ENCODE measurements at regions of chr4 and their contacts with region 1.

Region 1: DNA sequence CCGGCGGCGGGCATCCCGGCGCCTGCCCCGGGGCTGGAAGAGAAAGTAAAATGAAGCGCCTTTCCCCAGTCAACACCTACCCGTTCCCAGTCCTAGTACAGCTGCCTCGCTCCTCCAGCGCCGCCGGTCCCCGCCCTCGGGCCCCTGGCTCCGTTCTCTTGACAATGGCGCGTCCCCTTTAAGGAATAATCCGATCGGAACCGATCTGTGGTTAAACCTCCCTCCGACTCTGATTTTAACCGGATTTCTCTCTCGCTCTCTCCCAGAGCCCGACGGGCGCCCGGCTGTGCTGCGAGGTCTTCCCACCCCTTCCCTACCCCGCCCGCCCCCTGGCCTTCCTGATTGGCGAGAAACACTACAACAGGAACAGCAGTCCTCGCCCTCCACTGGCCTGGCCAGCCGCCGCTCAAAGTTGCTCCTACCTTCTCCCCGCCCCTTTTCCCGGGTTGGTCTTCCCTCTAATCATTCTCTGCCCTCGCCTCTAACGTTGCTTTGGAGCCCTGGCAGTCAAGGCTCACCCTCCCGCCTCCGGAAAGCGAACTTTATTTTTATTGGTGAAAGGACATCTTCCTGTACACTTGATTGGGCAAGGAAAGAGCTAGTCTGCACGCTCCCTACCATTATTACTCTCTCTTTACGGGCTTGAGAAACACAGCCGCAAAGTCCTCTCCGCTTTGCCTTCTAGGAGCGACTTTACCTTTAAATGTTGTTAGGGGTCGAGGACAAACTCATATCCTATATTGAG is at the start of gene FRYL:
- DNase-seq: peak; percentile 100
- H3K4me3 ChIP-seq: peak within 1 kb of the TSS; percentile 76 to 92 (median 92)
- H3K27ac ChIP-seq: peak within 1 kb of the TSS; percentile 69 to 95 (median 93)
- H3K4me1 ChIP-seq: peaks cover 12 to 22% of the 10 kb centered on the region in 2 donors
- H3K27me3 ChIP-seq: no peaks in the 10 kb centered on the region
- CTCF ChIP-seq: no peak
- POLR2A ChIP-seq: peak in 1 of 2 donors; percentile 80
- total RNA-seq, gene FRYL: 48.7 to 90.4 (median 67.8) TPM

Region 2: DNA sequence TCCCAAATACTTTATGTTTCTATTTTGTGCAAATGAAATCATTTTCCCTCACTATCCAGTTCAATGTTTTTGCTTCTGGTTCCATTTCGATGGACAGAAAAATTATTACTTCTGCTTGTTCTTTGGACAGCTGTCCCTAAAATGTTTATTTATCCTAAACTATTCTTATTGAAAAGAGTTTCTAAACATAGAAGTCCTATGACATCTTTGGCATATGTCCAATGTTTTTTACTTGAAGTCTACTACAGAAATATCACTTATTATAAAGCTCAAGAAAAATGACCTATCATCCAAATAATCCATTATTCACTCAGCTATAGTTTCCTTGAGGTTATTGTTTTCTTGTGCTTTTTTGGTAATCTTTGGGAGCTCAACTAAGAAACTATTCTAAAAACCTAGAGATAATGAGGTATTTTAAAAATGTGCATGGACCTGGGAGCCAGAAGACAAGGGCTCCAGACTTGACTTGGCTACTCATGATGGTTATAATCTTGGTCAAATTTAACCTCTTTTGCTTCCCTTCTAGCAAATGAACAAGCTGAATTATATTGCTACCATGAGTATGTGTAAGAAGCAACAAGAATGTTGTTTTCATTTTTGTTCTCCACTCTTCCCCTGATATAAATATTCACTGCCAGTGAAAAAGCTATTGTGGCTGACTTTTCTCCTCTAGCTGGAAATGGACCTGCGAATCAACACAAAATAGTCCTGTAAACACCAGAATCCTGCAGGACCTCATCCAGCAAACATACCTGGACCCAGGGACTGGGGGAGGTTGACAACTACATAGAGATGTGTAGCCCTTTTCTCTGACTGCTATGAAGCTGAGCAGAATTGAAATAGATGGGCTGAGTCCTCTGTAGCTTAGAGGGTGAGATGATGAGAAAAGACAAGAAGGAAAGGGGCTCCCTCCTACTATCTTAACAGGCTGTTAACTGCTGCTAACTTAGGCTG is 137.5 kb before region 1 on chr4:
- intact Hi-C with region 1: no loop called
- DNase-seq: no peak
- H3K4me3 ChIP-seq: no peak overlapping the region
- H3K27ac ChIP-seq: peak overlapping the region in 2 of 3 donors; percentile 12 to 37
- H3K4me1 ChIP-seq: peaks cover 27 to 30% of the 10 kb centered on the region in 2 donors
- H3K27me3 ChIP-seq: no peaks in the 10 kb centered on the region
- CTCF ChIP-seq: no peak
- POLR2A ChIP-seq: no peak

Region 3: DNA sequence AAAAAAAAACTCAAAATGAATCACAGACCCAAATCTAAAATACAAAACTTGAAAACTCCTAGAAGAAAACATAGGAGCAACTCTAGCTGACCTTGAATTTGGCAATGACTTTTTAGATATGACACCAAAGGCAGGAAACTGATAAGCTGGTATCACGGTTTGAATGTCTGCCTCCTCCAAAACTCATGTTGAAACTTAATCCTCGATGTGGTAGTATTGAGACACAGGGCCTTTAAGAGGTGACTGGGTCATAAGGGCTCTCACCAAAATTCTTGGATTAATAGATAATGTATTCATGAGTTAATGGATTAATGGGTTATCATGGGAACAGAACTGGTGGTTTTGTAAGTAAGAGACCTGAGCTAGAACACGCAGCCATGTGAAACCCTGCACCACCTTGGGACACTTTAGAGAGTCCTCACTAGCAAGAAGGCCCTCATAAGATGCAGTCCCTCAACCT is 40.6 kb before region 1 on chr4:
- intact Hi-C with region 1: no loop called
- DNase-seq: no peak
- H3K4me3 ChIP-seq: no peak overlapping the region
- H3K27ac ChIP-seq: no peak overlapping the region
- H3K4me1 ChIP-seq: peaks cover 0 to 5% of the 10 kb centered on the region in 2 donors
- H3K27me3 ChIP-seq: no peaks in the 10 kb centered on the region
- CTCF ChIP-seq: no peak
- POLR2A ChIP-seq: no peak

Region 4: GRCh38 chr4:48827622-48828021 is 47.5 kb after region 1 on chr4:
- intact Hi-C with region 1: loop called (anchors 2 kb)
- DNase-seq: no peak
- H3K4me3 ChIP-seq: no peak overlapping the region
- H3K27ac ChIP-seq: no peak overlapping the region
- H3K4me1 ChIP-seq: peaks cover 7 to 9% of the 10 kb centered on the region in 2 donors
- H3K27me3 ChIP-seq: no peaks in the 10 kb centered on the region
- CTCF ChIP-seq: no peak
- POLR2A ChIP-seq: no peak

Measured in thyroid gland (tissue), 4 donors.